Aorta (tissue), 5 donors: ENCODE measurements at regions of chr3 and their contacts with region 1.

Region 1: DNA sequence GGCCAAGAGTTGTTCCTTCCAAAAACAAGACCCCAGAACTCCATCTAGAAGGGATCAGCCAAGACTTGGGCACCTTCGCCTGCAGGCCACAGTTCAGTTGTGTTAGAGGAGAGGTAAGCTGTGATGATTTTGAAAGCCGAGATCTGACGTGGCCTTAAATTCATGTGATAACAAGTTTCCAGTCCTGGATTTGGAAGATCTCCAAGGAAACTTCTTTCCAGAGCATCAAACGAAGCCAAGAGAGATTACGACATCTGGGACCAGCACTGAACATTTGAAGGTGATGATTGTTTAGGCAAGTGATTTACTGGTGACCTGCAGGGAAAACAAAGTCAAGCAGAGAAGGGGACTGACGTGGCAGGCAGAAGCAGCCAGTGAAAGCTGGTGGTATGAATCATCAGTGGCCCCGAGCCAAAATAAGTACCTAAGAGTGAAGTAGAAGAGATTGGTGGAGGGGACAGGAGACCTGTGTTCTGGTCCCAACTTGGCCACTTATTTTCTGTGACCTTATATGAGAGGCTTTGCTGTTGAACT is 339.0 kb upstream of the PROK2 start:
- DNase-seq: peak in 1 of 2 donors; percentile 75
- ATAC-seq: peak; percentile 87
- H3K4me3 ChIP-seq: no peak overlapping the region
- H3K27ac ChIP-seq: peak overlapping the region in 1 of 2 donors; percentile 22
- H3K4me1 ChIP-seq: peaks cover 4 to 14% of the 10 kb centered on the region in 2 donors
- H3K27me3 ChIP-seq: no peaks in the 10 kb centered on the region

Region 2: GRCh38 chr3:72161881-72162620 is 38.1 kb after region 1 on chr3:
- intact Hi-C with region 1: no loop called
- DNase-seq: no peak
- ATAC-seq: no peak
- H3K4me3 ChIP-seq: no peak overlapping the region
- H3K27ac ChIP-seq: no peak overlapping the region
- H3K4me1 ChIP-seq: no peaks in the 10 kb centered on the region
- H3K27me3 ChIP-seq: no peaks in the 10 kb centered on the region

Region 3: DNA sequence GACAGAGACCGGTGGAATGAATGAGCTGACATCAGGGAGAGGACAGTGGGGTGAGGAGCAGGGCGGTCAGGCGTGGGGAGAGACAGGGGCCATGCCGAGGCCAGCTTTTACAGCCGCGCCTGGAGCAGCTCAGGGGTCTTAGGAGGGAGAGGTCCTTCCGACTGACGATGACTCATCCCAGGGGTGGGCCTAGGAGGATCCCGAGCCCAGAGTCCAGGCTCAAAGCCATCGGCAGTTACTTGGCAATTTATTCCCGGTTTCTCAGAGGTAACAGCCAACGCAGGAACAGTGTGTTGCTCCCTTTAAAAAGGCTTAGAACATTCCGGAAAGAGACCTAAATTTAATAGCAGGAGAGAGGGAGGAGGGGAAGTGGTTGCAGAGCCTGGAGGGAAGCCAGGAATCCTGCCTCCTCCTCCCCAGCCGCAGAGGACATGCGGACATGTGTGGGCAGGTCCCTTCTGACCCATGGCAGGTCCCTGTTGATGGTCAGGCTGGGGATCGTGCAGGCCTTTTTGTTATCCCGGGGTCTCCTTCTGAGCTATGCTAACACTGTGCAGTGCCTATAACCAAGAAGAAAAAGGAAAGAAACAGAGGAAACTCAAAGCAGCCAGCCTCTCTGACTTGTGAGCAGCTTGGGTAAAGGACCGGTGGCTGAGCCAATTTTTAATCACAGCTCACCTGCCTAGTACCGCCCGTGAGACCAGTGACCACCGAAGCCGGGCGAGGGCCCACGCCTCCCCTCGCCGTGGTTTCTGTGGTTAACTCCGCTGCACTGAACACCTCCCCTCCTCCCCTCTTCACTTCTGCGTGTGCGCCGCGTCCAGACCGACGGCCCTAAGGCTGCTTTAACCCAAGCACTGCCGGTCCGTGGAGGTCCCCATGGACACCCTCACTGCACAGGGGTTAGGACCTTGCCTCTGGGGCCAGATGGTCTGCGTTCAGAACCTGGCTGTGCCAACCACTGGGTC is 53.4 kb after region 1 on chr3:
- intact Hi-C with region 1: loop called in 1 of 2 experiments (anchors 2 kb)
- DNase-seq: peak; percentile 82 to 84
- ATAC-seq: peak; percentile 51
- H3K4me3 ChIP-seq: no peak overlapping the region
- H3K27ac ChIP-seq: no peak overlapping the region
- H3K4me1 ChIP-seq: peaks cover 3 to 16% of the 10 kb centered on the region in 2 donors
- H3K27me3 ChIP-seq: no peaks in the 10 kb centered on the region

Region 4: DNA sequence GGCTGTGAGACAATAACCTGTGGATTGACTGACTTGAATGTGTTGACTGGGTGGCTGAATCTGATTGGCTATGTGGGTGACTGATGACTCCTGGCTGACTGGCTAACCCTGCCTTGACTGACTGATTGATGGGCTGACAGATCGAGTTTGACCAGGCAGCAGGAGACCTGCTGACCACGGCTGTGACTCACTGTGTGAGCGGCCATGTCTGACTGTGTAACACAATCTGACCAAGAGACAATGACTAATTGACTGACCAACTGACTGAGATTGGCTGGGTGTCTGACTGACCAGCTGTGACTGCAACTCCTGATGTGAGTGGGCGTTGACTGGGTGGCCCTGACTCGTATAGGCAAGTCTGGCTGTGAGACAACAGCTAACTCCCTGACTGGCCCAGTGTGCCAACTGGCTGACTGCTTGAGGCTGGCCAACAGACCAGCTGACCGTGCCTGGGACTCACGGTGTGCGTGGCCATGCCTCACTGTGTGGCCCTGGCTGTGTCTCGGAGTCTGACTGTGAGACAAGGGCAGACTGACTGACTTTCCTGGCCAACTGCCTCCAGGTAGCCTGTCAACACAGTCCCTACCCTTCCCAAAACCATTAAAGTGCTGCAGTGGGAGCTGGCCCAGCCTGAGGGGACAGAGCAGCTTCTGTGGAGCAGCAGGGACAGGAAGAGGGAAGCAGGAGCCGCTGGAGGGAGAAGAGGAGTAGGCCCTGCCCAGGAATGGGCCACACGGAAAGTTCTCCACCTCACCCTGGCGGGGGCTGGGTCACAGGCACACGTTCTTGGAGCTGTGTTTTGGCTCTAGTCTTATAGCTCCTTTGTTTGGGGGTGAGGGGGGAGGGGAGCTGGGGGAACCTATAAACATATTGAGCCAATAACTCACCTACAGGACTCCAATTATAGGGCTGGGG is 215.4 kb after region 1 on chr3:
- intact Hi-C with region 1: loop called in 1 of 2 experiments (anchors 10 kb)
- DNase-seq: peak; percentile 85 to 88
- ATAC-seq: peak; percentile 9
- H3K4me3 ChIP-seq: no peak overlapping the region
- H3K27ac ChIP-seq: no peak overlapping the region
- H3K4me1 ChIP-seq: peaks cover 0 to 2% of the 10 kb centered on the region in 2 donors
- H3K27me3 ChIP-seq: no peaks in the 10 kb centered on the region